CD8-positive, alpha-beta T cell (primary cell): ENCODE measurements at regions of chr6 and their contacts with region 1.

Region 1: GRCh38 chr6:28940858-28941680 is 17.3 kb upstream of the TRIM27 start:
- DNase-seq: peak in 8 of 9 experiments; percentile 58 to 92 (median 70)
- ATAC-seq: peak; percentile 70
- H3K4me3 ChIP-seq: peak overlapping the region; percentile 66 to 81
- H3K4me3 Mint-ChIP-seq: peak overlapping the region; percentile 91
- H3K27ac ChIP-seq: peak overlapping the region; percentile 70 to 79
- H3K27ac Mint-ChIP-seq: peak overlapping the region; percentile 96
- H3K4me1 ChIP-seq: peaks cover 40% of the 10 kb centered on the region
- H3K4me1 Mint-ChIP-seq: peaks cover 46% of the 10 kb centered on the region
- H3K27me3 ChIP-seq: no peaks in the 10 kb centered on the region
- H3K27me3 Mint-ChIP-seq: no peaks in the 10 kb centered on the region
- CTCF ChIP-seq: no peak

Region 2: DNA sequence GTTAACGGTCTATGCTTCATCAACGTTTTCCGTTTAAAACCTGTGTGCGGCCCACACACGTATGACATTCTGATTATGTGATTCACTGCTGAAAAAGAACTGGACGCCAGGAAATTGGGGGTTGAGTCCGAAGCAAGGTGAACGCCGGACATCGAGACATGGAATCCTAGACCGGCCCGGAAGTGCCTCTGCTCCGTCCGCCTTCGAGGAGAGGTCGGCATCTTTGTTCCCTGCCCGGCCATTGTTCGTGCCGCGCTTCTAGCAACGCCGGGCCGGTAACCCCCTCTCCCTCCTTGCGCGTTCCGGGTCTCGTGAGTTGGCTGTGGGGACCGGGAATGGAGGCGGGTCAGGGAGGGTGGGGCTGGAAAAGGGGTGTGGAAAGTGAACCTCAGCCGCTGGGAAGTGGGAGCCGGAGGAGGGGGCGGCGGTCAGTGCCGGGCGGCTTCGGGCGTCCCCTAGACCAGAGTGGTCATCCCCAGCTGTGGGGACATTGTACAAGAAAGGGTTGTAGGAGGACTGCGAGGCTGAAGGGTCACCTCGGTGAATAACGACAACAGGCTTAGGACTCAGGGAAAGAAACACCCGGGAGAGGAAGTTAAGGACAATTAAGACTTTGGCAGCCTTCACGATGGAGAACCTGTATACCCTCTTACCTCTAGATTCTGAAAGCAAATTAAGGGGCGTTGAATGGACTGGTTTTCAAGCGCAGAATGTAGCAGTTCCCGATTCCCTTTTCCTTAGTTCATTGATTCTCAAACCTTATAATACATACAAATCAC is 715.8 kb before region 1 on chr6 and contains the start of gene ZSCAN9:
- CTCF ChIA-PET with region 1: no interaction called
- POLR2A ChIA-PET with region 1: no interaction called
- intact Hi-C with region 1: no loop called
- DNase-seq: peak in 7 of 9 experiments; percentile 20 to 72 (median 52)
- ATAC-seq: peak; percentile 66
- H3K4me3 ChIP-seq: peak within 1 kb of the TSS; percentile 64 to 80
- H3K4me3 Mint-ChIP-seq: peak within 1 kb of the TSS; percentile 92
- H3K27ac ChIP-seq: peak within 1 kb of the TSS in 1 of 2 experiments; percentile 55
- H3K27ac Mint-ChIP-seq: peak within 1 kb of the TSS; percentile 42
- H3K4me1 ChIP-seq: peaks cover 12% of the 10 kb centered on the region
- H3K4me1 Mint-ChIP-seq: peaks cover 13% of the 10 kb centered on the region
- H3K27me3 ChIP-seq: peaks cover 5 to 9% of the 10 kb centered on the region in 2 experiments
- H3K27me3 Mint-ChIP-seq: peaks cover 45% of the 10 kb centered on the region
- CTCF ChIP-seq: no peak
- total RNA-seq, gene ZSCAN9: 2.1 to 3.0 TPM

Region 3: GRCh38 chr6:28880894-28881780 is 59.9 kb before region 1 on chr6:
- CTCF ChIA-PET with region 1: interaction called, 5 read pairs
- POLR2A ChIA-PET with region 1: interaction called, 4 read pairs
- intact Hi-C with region 1: loop called (anchors 1 to 5 kb)
- DNase-seq: peak; percentile 14 to 81 (median 53)
- ATAC-seq: no peak
- H3K4me3 ChIP-seq: peak overlapping the region; percentile 37 to 45
- H3K4me3 Mint-ChIP-seq: peak overlapping the region; percentile 86
- H3K27ac ChIP-seq: no peak overlapping the region
- H3K27ac Mint-ChIP-seq: peak overlapping the region; percentile 89
- H3K4me1 ChIP-seq: peaks cover 29% of the 10 kb centered on the region
- H3K4me1 Mint-ChIP-seq: peaks cover 52% of the 10 kb centered on the region
- H3K27me3 ChIP-seq: peaks cover 0 to 3% of the 10 kb centered on the region in 2 experiments
- H3K27me3 Mint-ChIP-seq: peaks cover 4% of the 10 kb centered on the region
- CTCF ChIP-seq: no peak

Region 4: GRCh38 chr6:28895134-28895812 is 45.8 kb before region 1 on chr6:
- CTCF ChIA-PET with region 1: interaction called, 5 read pairs
- POLR2A ChIA-PET with region 1: interaction called, 15 read pairs
- intact Hi-C with region 1: loop called (anchors 1 kb)
- DNase-seq: peak; percentile 83 to 97 (median 90)
- ATAC-seq: peak; percentile 68
- H3K4me3 ChIP-seq: peak overlapping the region; percentile 79 to 80
- H3K4me3 Mint-ChIP-seq: peak overlapping the region; percentile 98
- H3K27ac ChIP-seq: peak overlapping the region; percentile 95 to 98
- H3K27ac Mint-ChIP-seq: peak overlapping the region; percentile 99
- H3K4me1 ChIP-seq: peaks cover 8% of the 10 kb centered on the region
- H3K4me1 Mint-ChIP-seq: peaks cover 18% of the 10 kb centered on the region
- H3K27me3 ChIP-seq: no peaks in the 10 kb centered on the region
- H3K27me3 Mint-ChIP-seq: no peaks in the 10 kb centered on the region
- CTCF ChIP-seq: no peak

Region 5: GRCh38 chr6:28923318-28924102 is 17.6 kb before region 1 on chr6 and contains the start of gene TRIM27:
- CTCF ChIA-PET with region 1: interaction called, 16 read pairs
- POLR2A ChIA-PET with region 1: interaction called, 31 read pairs
- intact Hi-C with region 1: loop called (anchors 1 kb)
- DNase-seq: peak; percentile 51 to 90 (median 77)
- ATAC-seq: peak; percentile 81
- H3K4me3 ChIP-seq: peak within 1 kb of the TSS; percentile 84 to 97
- H3K4me3 Mint-ChIP-seq: peak within 1 kb of the TSS; percentile 88
- H3K27ac ChIP-seq: peak within 1 kb of the TSS; percentile 73 to 87
- H3K27ac Mint-ChIP-seq: peak within 1 kb of the TSS; percentile 94
- H3K4me1 ChIP-seq: peaks cover 33% of the 10 kb centered on the region
- H3K4me1 Mint-ChIP-seq: peaks cover 42% of the 10 kb centered on the region
- H3K27me3 ChIP-seq: no peaks in the 10 kb centered on the region
- H3K27me3 Mint-ChIP-seq: no peaks in the 10 kb centered on the region
- CTCF ChIP-seq: no peak
- total RNA-seq, gene TRIM27: 7.8 to 9.4 TPM

Region 6: DNA sequence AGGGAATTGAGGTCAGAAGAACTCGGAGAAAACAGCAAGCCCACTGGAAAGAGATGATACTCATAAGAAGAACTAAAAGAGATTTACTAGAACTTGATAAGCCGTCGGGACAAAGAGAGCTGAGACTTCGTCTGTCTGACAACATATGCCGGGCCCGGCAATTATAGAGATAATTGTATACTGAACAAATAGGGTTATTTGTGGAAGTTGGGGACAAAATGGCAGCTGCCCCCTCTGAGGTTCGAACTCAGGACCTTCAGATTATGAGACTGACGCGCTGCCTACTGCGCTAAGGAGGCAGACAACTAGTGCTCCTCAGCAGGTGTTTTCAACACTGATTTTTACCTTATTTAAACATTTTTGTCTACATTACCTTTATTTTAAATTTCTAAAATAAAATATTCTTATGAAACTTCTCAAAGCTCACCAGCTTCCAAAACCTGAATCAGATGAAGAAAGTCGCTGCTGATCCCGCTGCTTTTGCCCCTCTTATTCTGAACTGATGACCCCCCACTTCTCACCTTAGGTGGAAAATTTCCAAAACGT is 12.0 kb after region 1 on chr6:
- CTCF ChIA-PET with region 1: interaction called, 3 read pairs
- POLR2A ChIA-PET with region 1: interaction called, 3 read pairs
- intact Hi-C with region 1: loop called in 1 of 2 experiments (anchors 1 kb)
- DNase-seq: peak in 8 of 9 experiments; percentile 20 to 75 (median 53)
- ATAC-seq: peak; percentile 72
- H3K4me3 ChIP-seq: peak overlapping the region; percentile 43 to 45
- H3K4me3 Mint-ChIP-seq: peak overlapping the region; percentile 86
- H3K27ac ChIP-seq: no peak overlapping the region
- H3K27ac Mint-ChIP-seq: peak overlapping the region; percentile 29
- H3K4me1 ChIP-seq: peaks cover 14% of the 10 kb centered on the region
- H3K4me1 Mint-ChIP-seq: peaks cover 16% of the 10 kb centered on the region
- H3K27me3 ChIP-seq: no peaks in the 10 kb centered on the region
- H3K27me3 Mint-ChIP-seq: peaks cover 7% of the 10 kb centered on the region
- CTCF ChIP-seq: no peak

Region 7: DNA sequence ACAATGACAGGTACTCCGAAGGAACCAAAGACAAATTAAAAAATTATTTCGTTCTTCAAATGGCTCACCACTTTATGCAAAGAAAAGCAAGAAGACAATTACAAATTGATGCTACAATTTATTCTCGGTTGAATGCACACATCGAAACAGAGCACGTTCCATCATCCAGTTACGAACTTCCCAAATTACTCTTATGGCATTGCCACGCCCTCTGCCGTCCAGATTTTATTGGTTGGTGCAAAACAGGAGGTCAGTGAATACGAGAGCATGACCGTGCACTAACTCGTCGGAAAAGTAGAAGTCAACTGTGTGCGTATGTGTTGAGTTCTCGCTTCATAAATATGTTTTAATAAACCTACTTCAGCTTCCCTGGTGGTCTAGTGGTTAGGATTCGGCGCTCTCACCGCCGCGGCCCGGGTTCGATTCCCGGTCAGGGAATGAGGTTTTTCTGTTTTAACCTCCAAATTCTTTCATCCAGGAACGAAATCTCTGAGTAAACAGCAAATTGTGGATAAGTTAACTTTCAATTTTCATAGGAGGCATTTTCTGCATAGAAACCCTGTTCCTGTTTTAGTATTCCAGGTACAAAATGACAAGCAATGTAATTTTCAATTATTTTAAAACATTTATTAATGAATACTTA is 40.9 kb after region 1 on chr6:
- CTCF ChIA-PET with region 1: interaction called, 4 read pairs
- POLR2A ChIA-PET with region 1: interaction called, 5 read pairs
- intact Hi-C with region 1: loop called (anchors 1 kb)
- DNase-seq: peak; percentile 43 to 89 (median 70)
- ATAC-seq: peak; percentile 69
- H3K4me3 ChIP-seq: peak overlapping the region; percentile 94 to 98
- H3K4me3 Mint-ChIP-seq: peak overlapping the region; percentile 89
- H3K27ac ChIP-seq: peak overlapping the region; percentile 14 to 59
- H3K27ac Mint-ChIP-seq: peak overlapping the region; percentile 91
- H3K4me1 ChIP-seq: peaks cover 17% of the 10 kb centered on the region
- H3K4me1 Mint-ChIP-seq: peaks cover 59% of the 10 kb centered on the region
- H3K27me3 ChIP-seq: peaks cover 0 to 6% of the 10 kb centered on the region in 2 experiments
- H3K27me3 Mint-ChIP-seq: peaks cover 34% of the 10 kb centered on the region
- CTCF ChIP-seq: no peak